Activated CD8-positive, alpha-beta T cell treated with anti-CD3 and anti-CD28 coated beads for 36 hours (primary cell): ENCODE measurements at regions of chr2 and their contacts with region 1.

Region 1: GRCh38 chr2:232327105-232328041 is 51.2 kb upstream of the ALPP start:
- DNase-seq: peak; percentile 90
- ATAC-seq: peak; percentile 84
- H3K4me3 Mint-ChIP-seq: no peak overlapping the region
- H3K27ac Mint-ChIP-seq: no peak overlapping the region
- H3K4me1 Mint-ChIP-seq: peaks cover 27% of the 10 kb centered on the region
- H3K27me3 Mint-ChIP-seq: no peaks in the 10 kb centered on the region
- CTCF ChIP-seq: peak; percentile 87

Region 2: DNA sequence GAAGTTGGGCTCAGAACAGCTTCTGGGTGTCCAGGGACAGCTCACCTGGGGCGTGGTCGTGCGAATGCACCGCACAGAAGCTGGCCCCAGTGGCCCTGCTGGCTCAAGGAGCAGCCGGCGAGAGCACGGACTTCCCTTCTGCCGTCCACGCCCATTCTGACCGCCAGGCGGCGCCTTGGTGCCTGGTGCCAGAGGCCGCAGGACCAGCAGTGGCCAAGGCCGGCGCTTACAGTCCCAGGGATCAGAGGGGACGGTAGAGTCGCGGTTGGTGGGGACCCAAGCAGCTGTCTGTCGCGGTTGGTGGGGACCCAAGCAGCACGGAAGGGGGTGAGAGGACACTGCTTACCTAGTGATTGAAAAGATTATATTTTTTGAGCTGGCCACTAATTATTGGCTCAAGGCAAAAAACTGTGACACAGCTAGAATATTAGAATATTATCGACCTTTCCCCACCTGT is 426.9 kb before region 1 on chr2:
- CTCF ChIA-PET with region 1: interaction called, 26 read pairs
- POLR2A ChIA-PET with region 1: no interaction called
- intact Hi-C with region 1: no loop called
- DNase-seq: peak; percentile 79
- ATAC-seq: peak; percentile 66
- H3K4me3 Mint-ChIP-seq: no peak overlapping the region
- H3K27ac Mint-ChIP-seq: no peak overlapping the region
- H3K4me1 Mint-ChIP-seq: no peaks in the 10 kb centered on the region
- H3K27me3 Mint-ChIP-seq: peaks cover 2% of the 10 kb centered on the region
- CTCF ChIP-seq: peak; percentile 90

Region 3: GRCh38 chr2:231925303-231926179 is 401.8 kb before region 1 on chr2:
- CTCF ChIA-PET with region 1: interaction called, 77 read pairs
- POLR2A ChIA-PET with region 1: interaction called, 5 read pairs
- intact Hi-C with region 1: loop called (anchors 5 kb)
- DNase-seq: peak; percentile 82
- ATAC-seq: peak; percentile 40
- H3K4me3 Mint-ChIP-seq: peak overlapping the region; percentile 70
- H3K27ac Mint-ChIP-seq: no peak overlapping the region
- H3K4me1 Mint-ChIP-seq: peaks cover 8% of the 10 kb centered on the region
- H3K27me3 Mint-ChIP-seq: peaks cover 42% of the 10 kb centered on the region
- CTCF ChIP-seq: peak; percentile 91

Region 4: GRCh38 chr2:232142049-232142448 is 185.3 kb before region 1 on chr2:
- CTCF ChIA-PET with region 1: interaction called, 46 read pairs
- POLR2A ChIA-PET with region 1: no interaction called
- intact Hi-C with region 1: loop called (anchors 10 kb)
- DNase-seq: peak; percentile 69
- ATAC-seq: peak; percentile 57
- H3K4me3 Mint-ChIP-seq: no peak overlapping the region
- H3K27ac Mint-ChIP-seq: no peak overlapping the region
- H3K4me1 Mint-ChIP-seq: peaks cover 40% of the 10 kb centered on the region
- H3K27me3 Mint-ChIP-seq: no peaks in the 10 kb centered on the region
- CTCF ChIP-seq: peak; percentile 64

Region 5: GRCh38 chr2:232299084-232299483 is 28.3 kb before region 1 on chr2:
- CTCF ChIA-PET with region 1: interaction called, 16 read pairs
- POLR2A ChIA-PET with region 1: no interaction called
- intact Hi-C with region 1: no loop called
- DNase-seq: peak; percentile 22
- ATAC-seq: peak; percentile 48
- H3K4me3 Mint-ChIP-seq: no peak overlapping the region
- H3K27ac Mint-ChIP-seq: no peak overlapping the region
- H3K4me1 Mint-ChIP-seq: peaks cover 24% of the 10 kb centered on the region
- H3K27me3 Mint-ChIP-seq: no peaks in the 10 kb centered on the region
- CTCF ChIP-seq: no peak

Region 6: DNA sequence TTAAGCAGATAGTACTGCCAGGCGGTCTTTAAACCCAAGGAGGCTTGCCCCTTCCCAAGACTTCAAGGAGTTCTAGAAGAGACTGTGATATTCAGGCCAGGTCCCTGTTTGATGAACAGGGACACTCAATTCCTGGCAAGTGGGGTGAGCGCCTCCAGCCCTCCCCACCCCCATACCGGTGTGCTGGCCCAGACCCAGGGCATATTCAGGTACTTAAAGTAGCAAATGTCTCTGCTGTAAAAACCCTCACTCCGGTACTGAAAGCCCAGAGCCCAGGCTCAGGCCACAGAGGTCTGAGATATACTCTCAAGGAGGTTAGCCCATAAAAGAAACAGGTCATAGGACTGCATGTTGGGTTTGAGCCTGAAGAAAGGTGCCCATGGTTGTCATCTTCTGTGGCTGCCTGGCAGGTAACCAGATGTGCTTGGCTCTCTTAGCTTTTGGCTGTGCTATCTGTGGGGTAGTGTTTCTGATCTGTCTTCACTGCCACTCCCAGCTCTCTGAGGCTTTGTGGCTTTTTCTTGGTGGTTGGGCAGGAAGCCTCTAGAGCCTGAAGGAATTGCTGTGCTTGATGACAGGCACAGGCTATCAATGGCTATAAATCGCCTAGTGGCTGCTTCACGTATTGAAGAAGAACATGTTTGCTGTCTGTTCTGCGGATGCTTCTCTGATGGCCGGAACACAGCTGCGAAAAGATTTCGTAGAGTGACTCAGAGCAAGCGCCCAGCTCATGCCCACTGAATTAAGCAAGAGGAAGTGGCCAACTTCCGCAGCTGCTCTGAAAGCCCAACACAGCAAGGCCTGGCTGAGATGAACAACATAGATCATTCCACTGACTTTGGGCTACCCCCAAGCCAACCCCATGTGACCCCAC is 12.1 kb before region 1 on chr2:
- CTCF ChIA-PET with region 1: interaction called, 36 read pairs
- POLR2A ChIA-PET with region 1: interaction called, 5 read pairs
- intact Hi-C with region 1: no loop called
- DNase-seq: peak; percentile 91
- ATAC-seq: peak; percentile 89
- H3K4me3 Mint-ChIP-seq: peak overlapping the region; percentile 59
- H3K27ac Mint-ChIP-seq: peak overlapping the region; percentile 98
- H3K4me1 Mint-ChIP-seq: peaks cover 80% of the 10 kb centered on the region
- H3K27me3 Mint-ChIP-seq: no peaks in the 10 kb centered on the region
- CTCF ChIP-seq: peak; percentile 70

Region 7: GRCh38 chr2:232588680-232589585 is 261.6 kb after region 1 on chr2:
- CTCF ChIA-PET with region 1: no interaction called
- POLR2A ChIA-PET with region 1: no interaction called
- intact Hi-C with region 1: no loop called
- DNase-seq: no peak
- ATAC-seq: no peak
- H3K4me3 Mint-ChIP-seq: no peak overlapping the region
- H3K27ac Mint-ChIP-seq: no peak overlapping the region
- H3K4me1 Mint-ChIP-seq: peaks cover 4% of the 10 kb centered on the region
- H3K27me3 Mint-ChIP-seq: no peaks in the 10 kb centered on the region
- CTCF ChIP-seq: no peak